Left colon (tissue), 2 donors: ENCODE measurements at regions of chr2 and their contacts with region 1.

Region 1: DNA sequence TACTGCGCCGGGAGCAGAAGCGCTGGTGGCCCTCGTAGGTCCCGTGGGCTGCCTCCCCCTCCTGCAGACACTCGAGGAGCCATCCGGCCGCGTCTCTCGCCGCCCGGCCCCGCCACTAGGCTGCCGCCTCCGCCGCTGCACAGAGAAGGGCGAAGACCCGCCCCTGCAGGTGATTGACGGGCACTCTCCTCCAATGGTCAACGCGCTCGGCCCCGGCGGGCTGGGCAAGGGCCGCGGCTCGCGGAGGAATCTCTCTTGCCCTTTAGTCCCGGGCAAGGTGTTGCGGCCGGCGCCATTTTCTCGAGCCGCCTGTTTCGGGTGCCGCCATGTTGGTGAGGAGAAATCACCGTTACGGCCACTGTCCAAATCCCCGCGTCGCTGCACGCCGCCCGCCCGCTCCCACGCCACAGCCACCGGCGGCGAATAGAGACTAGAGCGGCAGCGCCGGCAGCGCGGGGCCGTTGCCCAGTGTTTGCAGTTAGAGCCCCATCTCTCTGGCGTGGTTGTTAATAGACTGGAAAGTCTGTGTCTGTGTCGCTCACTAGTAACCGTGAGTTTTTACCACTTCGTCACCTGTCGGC is at the start of gene ZC3H6:
- DNase-seq: peak; percentile 97 to 99
- ATAC-seq: peak; percentile 97
- total RNA-seq, gene ZC3H6: 5.5 to 9.6 TPM

Region 2: DNA sequence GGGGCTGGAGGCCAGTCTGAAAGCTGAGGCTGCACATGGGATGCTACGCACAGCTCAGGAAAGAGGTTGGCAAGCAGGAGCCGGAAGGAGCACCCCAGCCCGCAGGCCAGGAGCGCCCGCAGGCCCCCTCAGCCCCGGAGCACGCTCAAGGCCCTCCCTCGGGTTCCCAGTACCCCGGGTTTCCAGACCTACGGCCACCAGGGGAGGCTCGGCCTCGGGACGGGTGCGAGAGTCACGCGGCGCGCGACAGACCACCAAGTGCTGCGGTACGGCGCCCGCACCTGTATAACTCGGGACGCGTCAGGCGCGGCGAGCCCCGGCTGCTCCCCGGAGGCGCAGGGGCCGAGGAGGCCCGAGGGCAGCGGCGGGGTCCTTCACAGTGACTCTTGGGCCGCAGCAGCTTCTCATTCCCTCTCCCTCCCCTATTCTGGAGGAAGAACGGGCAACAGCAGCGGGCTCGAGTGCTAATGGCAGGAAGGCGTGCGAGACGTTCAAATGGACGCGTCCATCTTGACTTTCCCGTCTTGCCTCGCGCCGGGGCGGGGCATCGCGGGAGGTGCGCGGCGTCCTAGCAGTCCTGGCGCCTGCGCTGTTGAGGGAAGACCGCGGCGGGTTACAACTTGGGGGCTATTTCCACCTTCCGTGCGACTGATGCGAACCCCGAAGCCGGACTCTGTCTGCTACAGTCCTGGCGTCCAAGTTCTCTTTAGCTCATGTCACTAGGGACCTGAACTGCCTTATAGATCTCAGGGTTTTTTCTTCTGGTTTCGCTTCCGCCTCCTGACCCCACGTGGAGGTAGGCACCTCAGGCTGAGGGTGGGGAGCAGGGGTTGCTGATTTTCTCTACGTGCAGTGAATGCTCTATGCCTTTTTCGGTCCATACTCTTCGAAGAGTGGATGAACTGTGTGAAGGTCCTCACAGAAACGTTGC is 391.5 kb before region 1 on chr2 and contains the start of gene ANAPC1:
- intact Hi-C with region 1: loop called in 1 of 2 experiments (anchors 10 kb)
- DNase-seq: peak; percentile 80 to 89
- ATAC-seq: peak; percentile 92
- total RNA-seq, gene ANAPC1: 29.2 to 39.0 TPM